ENCODE measurements at regions of chr9 and their contacts with region 1.

Region 1: GRCh38 chr9:11045589-11045988 is 432.8 kb upstream of the PTPRD start:
- DNase-seq: no peak
- H3K4me3 Mint-ChIP-seq: no peak overlapping the region
- H3K27ac Mint-ChIP-seq: no peak overlapping the region
- H3K4me1 Mint-ChIP-seq: no peaks in the 10 kb centered on the region
- H3K27me3 Mint-ChIP-seq: peaks cover 43% of the 10 kb centered on the region
- CTCF ChIP-seq: no peak

Region 2: DNA sequence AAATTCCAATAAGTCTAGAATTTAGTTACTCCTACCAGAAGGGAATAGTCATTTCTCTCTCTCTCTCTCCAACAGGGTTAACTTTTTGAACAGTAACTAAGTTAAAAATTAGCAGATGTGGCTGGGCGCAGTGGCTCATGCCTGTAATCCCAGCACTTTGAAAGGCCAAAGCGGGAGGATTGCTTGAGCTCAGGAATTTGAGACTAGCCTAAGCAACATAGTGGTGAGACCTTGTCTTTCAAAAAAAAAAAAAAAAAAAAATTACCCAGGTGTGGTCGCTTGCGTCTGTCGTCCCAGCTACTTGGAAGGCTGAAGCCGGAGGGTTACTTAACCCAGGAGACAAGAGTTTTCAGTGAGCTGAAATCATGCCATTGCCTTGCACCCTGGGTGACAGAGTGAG is 1072.5 kb before region 1 on chr9:
- CTCF ChIA-PET with region 1: no interaction called
- POLR2A ChIA-PET with region 1: no interaction called
- intact Hi-C with region 1: no loop called
- DNase-seq: no peak
- H3K4me3 Mint-ChIP-seq: no peak overlapping the region
- H3K27ac Mint-ChIP-seq: no peak overlapping the region
- H3K4me1 Mint-ChIP-seq: no peaks in the 10 kb centered on the region
- H3K27me3 Mint-ChIP-seq: peaks cover 85% of the 10 kb centered on the region
- CTCF ChIP-seq: no peak

Region 3: GRCh38 chr9:11107196-11107595 is 61.6 kb after region 1 on chr9:
- CTCF ChIA-PET with region 1: no interaction called
- POLR2A ChIA-PET with region 1: no interaction called
- intact Hi-C with region 1: loop called (anchors 2 kb)
- DNase-seq: no peak
- H3K4me3 Mint-ChIP-seq: no peak overlapping the region
- H3K27ac Mint-ChIP-seq: no peak overlapping the region
- H3K4me1 Mint-ChIP-seq: no peaks in the 10 kb centered on the region
- H3K27me3 Mint-ChIP-seq: no peaks in the 10 kb centered on the region
- CTCF ChIP-seq: no peak

Region 4: GRCh38 chr9:11158063-11158462 is 112.5 kb after region 1 on chr9:
- CTCF ChIA-PET with region 1: no interaction called
- POLR2A ChIA-PET with region 1: no interaction called
- intact Hi-C with region 1: no loop called
- DNase-seq: no peak
- H3K4me3 Mint-ChIP-seq: no peak overlapping the region
- H3K27ac Mint-ChIP-seq: no peak overlapping the region
- H3K4me1 Mint-ChIP-seq: peaks cover 5% of the 10 kb centered on the region
- H3K27me3 Mint-ChIP-seq: peaks cover 9% of the 10 kb centered on the region
- CTCF ChIP-seq: no peak

Measured in MCF 10A (cell line).